ENCODE measurements at regions of chr5 and their contacts with region 1.

Region 1: DNA sequence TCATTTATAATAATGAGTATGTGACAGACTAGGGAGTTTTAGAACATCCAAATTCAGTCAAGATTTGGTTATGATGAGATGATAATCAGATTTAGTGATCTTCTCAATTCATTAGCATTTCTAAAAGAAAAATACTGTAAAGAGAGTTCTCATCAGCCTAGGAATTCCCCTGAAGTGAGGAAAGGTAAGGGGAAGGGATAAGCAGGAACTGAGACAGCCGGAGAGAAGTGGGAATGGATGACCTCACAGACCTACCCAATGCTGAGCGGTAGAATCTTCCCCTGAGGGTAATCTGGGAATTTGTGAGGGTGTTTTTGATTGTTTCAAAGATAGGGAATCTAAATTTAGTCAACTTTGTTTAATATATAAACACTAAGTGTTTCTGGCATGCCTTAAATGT is 16.7 kb upstream of the GPBP1 start:
- DNase-seq: no peak
- ATAC-seq: no peak
- H3K4me3 ChIP-seq: no peak overlapping the region
- H3K27ac ChIP-seq: no peak overlapping the region
- H3K4me1 ChIP-seq: no peaks in the 10 kb centered on the region
- H3K27me3 ChIP-seq: no peaks in the 10 kb centered on the region
- CTCF ChIP-seq: no peak
- POLR2A ChIP-seq: no peak
- RAD21 ChIP-seq: no peak

Region 2: GRCh38 chr5:57082441-57083067 is 74.6 kb before region 1 on chr5:
- CTCF ChIA-PET with region 1: no interaction called
- POLR2A ChIA-PET with region 1: no interaction called
- dilution Hi-C with region 1: no loop called
- in situ Hi-C with region 1: no loop called
- intact Hi-C with region 1: no loop called
- DNase-seq: peak; percentile 10
- ATAC-seq: peak; percentile 56; the same call in 1 of the 2 replicates
- H3K4me3 ChIP-seq: no peak overlapping the region
- H3K27ac ChIP-seq: no peak overlapping the region
- H3K4me1 ChIP-seq: no peaks in the 10 kb centered on the region
- H3K27me3 ChIP-seq: peaks cover 8% of the 10 kb centered on the region
- CTCF ChIP-seq: peak; percentile 34; the same call in 1 of the 2 replicates
- POLR2A ChIP-seq: no peak
- RAD21 ChIP-seq: peak; percentile 32; the same call in 1 of the 2 replicates

Region 3: GRCh38 chr5:57094753-57095683 is 62.1 kb before region 1 on chr5:
- CTCF ChIA-PET with region 1: no interaction called
- POLR2A ChIA-PET with region 1: no interaction called
- dilution Hi-C with region 1: no loop called
- in situ Hi-C with region 1: loop called (anchors 10 kb)
- intact Hi-C with region 1: no loop called
- DNase-seq: no peak
- ATAC-seq: no peak
- H3K4me3 ChIP-seq: no peak overlapping the region
- H3K27ac ChIP-seq: no peak overlapping the region
- H3K4me1 ChIP-seq: no peaks in the 10 kb centered on the region
- H3K27me3 ChIP-seq: peaks cover 3% of the 10 kb centered on the region
- CTCF ChIP-seq: no peak
- POLR2A ChIP-seq: no peak
- RAD21 ChIP-seq: no peak

Measured in IMR-90 (cell line).